HCT116 (cell line): ENCODE measurements at regions of chr20 and their contacts with region 1.

Region 1: GRCh38 chr20:53547664-53548239 is 45.9 kb downstream of the ZNF217 start:
- DNase-seq: peak; percentile 42
- ATAC-seq: peak; percentile 87
- H3K4me3 ChIP-seq: no peak overlapping the region
- H3K27ac ChIP-seq: no peak overlapping the region
- H3K4me1 ChIP-seq: no peaks in the 10 kb centered on the region
- H3K27me3 ChIP-seq: no peaks in the 10 kb centered on the region
- CTCF ChIP-seq: peak; percentile 67 to 86 (median 80); a peak in 5 of 6 replicates
- POLR2A ChIP-seq: no peak
- RAD21 ChIP-seq: peak; percentile 86

Region 2: DNA sequence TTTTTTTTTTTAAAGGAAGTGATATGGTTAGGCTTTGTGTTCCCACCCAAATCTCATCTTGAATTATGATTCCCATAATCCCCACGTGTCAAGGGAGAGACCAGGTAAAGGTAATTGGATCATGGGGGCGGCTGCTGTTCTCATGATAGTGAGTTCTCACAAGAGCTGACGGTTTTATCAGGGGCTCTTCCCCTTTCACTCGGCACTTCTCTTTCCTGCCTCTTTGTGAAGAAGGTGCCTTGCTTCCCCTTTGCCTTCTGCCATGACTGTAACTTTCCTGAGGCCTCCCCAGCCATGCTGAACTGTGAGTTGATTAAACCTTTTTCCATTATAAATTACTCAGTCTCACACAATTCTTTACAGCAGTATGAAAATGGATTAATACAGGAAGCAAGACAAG is 1420.4 kb before region 1 on chr20:
- CTCF ChIA-PET with region 1: interaction called, 7 read pairs
- POLR2A ChIA-PET with region 1: no interaction called
- RAD21 ChIA-PET with region 1: no interaction called
- intact Hi-C with region 1: loop called (anchors 10 kb)
- DNase-seq: no peak
- ATAC-seq: no peak
- H3K4me3 ChIP-seq: no peak overlapping the region
- H3K27ac ChIP-seq: no peak overlapping the region
- H3K4me1 ChIP-seq: no peaks in the 10 kb centered on the region
- H3K27me3 ChIP-seq: no peaks in the 10 kb centered on the region
- CTCF ChIP-seq: no peak
- POLR2A ChIP-seq: no peak
- RAD21 ChIP-seq: no peak

Region 3: DNA sequence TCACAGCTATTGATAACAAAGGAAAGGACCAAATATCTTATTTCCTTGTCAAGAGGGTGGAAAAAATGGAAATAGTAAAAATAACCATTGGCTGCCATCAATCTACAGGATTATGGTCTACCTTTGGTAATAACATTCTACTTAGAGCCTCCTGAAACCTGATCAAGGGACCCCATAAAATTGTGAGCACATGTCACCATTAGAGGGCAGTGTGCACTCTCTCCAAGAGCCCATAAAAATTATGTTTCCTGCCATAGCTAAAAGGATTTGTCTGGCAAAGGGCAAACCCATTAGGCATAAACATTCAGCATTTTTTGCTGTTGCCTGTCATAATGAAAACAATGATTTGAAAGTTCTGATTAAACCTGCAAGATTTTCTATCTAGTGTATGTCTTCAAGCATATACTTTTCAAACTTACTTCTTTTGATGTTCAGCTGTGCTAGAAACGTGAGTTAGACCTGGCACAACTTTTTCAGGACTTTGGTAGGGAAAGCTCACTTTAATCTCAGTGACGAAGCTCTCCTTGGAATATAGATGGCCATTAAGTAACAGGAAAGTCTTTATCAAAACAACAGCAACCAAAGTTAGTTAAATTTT is 1235.5 kb before region 1 on chr20:
- CTCF ChIA-PET with region 1: interaction called, 30 read pairs
- POLR2A ChIA-PET with region 1: no interaction called
- RAD21 ChIA-PET with region 1: no interaction called
- intact Hi-C with region 1: loop called (anchors 2 kb)
- DNase-seq: peak; percentile 54
- ATAC-seq: peak; percentile 75
- H3K4me3 ChIP-seq: no peak overlapping the region
- H3K27ac ChIP-seq: no peak overlapping the region
- H3K4me1 ChIP-seq: no peaks in the 10 kb centered on the region
- H3K27me3 ChIP-seq: peaks cover 20% of the 10 kb centered on the region
- CTCF ChIP-seq: peak; percentile 47 to 88 (median 65); a peak in 4 of 6 replicates
- POLR2A ChIP-seq: no peak
- RAD21 ChIP-seq: peak; percentile 56

Region 4: GRCh38 chr20:53187392-53188068 is 360.2 kb before region 1 on chr20:
- CTCF ChIA-PET with region 1: interaction called, 13 read pairs
- POLR2A ChIA-PET with region 1: no interaction called
- RAD21 ChIA-PET with region 1: no interaction called
- intact Hi-C with region 1: no loop called
- DNase-seq: no peak
- ATAC-seq: no peak
- H3K4me3 ChIP-seq: no peak overlapping the region
- H3K27ac ChIP-seq: no peak overlapping the region
- H3K4me1 ChIP-seq: no peaks in the 10 kb centered on the region
- H3K27me3 ChIP-seq: peaks cover 50% of the 10 kb centered on the region
- CTCF ChIP-seq: no peak
- POLR2A ChIP-seq: no peak
- RAD21 ChIP-seq: no peak

Region 5: DNA sequence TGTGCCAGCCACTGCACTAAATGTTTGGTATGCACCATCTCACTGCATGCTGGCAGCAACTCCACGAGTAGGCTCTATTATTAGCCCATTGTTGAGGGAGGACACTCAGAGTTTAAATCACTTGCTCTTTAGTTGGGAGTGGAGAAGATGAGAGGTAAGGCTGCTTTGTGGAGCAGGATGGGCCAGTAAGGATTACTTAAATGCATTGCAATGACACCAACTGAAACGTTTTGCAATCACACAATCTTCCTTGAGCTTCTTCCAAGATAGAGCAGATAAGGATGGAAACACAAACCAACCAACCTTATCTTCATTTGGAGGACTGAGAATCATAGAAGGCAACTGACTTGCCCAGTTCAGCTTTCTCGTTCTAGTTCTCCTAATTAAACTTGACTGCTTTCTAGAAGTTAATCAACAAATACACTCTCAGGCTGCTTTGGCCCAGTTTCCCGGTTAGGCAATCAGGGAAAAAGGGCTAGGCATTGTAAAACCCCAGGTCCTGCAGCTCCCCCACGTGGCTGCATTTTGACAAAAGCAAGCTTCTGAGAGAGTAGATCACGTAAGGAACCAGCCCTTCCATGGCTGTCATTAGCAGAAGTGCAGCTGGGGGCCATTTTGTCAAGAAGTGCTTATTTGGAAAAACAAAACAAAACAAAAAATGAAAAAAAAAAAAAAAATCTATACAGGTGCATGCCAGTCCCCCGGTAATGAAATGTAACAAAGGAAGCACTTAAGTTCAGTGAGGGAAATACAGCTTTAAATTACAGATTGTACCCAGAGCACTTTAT is 392.0 kb after region 1 on chr20:
- CTCF ChIA-PET with region 1: interaction called, 17 read pairs
- POLR2A ChIA-PET with region 1: no interaction called
- RAD21 ChIA-PET with region 1: interaction called, 3 to 4 read pairs
- intact Hi-C with region 1: no loop called
- DNase-seq: peak; percentile 88
- ATAC-seq: peak; percentile 93
- H3K4me3 ChIP-seq: no peak overlapping the region
- H3K27ac ChIP-seq: no peak overlapping the region
- H3K4me1 ChIP-seq: peaks cover 0 to 22% of the 10 kb centered on the region in 2 experiments; a peak in 2 of 4 replicates
- H3K27me3 ChIP-seq: no peaks in the 10 kb centered on the region
- CTCF ChIP-seq: peak; percentile 74 to 85 (median 84)
- POLR2A ChIP-seq: no peak
- RAD21 ChIP-seq: peak; percentile 96